ENCODE measurements at regions of chr2 and their contacts with region 1.

Region 1: GRCh38 chr2:148201075-148202004 is 180.4 kb downstream of the MBD5 start:
- DNase-seq: peak; percentile 60
- H3K4me3 Mint-ChIP-seq: no peak overlapping the region
- H3K27ac Mint-ChIP-seq: no peak overlapping the region
- H3K4me1 Mint-ChIP-seq: no peaks in the 10 kb centered on the region
- H3K27me3 Mint-ChIP-seq: no peaks in the 10 kb centered on the region

Region 2: GRCh38 chr2:147937744-147938349 is 263.5 kb before region 1 on chr2:
- CTCF ChIA-PET with region 1: interaction called, 3 read pairs
- intact Hi-C with region 1: loop called (anchors 1 kb)
- DNase-seq: no peak
- H3K4me3 Mint-ChIP-seq: no peak overlapping the region
- H3K27ac Mint-ChIP-seq: no peak overlapping the region
- H3K4me1 Mint-ChIP-seq: no peaks in the 10 kb centered on the region
- H3K27me3 Mint-ChIP-seq: no peaks in the 10 kb centered on the region

Region 3: GRCh38 chr2:148067801-148068200 is 133.5 kb before region 1 on chr2:
- CTCF ChIA-PET with region 1: no interaction called
- intact Hi-C with region 1: no loop called
- DNase-seq: no peak
- H3K4me3 Mint-ChIP-seq: no peak overlapping the region
- H3K27ac Mint-ChIP-seq: no peak overlapping the region
- H3K4me1 Mint-ChIP-seq: peaks cover 2% of the 10 kb centered on the region
- H3K27me3 Mint-ChIP-seq: no peaks in the 10 kb centered on the region

Region 4: GRCh38 chr2:148218326-148219075 is 17.2 kb after region 1 on chr2:
- CTCF ChIA-PET with region 1: no interaction called
- intact Hi-C with region 1: no loop called
- DNase-seq: no peak
- H3K4me3 Mint-ChIP-seq: no peak overlapping the region
- H3K27ac Mint-ChIP-seq: no peak overlapping the region
- H3K4me1 Mint-ChIP-seq: no peaks in the 10 kb centered on the region
- H3K27me3 Mint-ChIP-seq: no peaks in the 10 kb centered on the region